Dorsolateral prefrontal cortex (tissue), 120 donors: ENCODE measurements at regions of chr9 and their contacts with region 1.

Region 1: GRCh38 chr9:4740638-4741364 is at the start of gene AK3:
- DNase-seq: peak; percentile 58 to 92 (median 81)
- H3K4me3 ChIP-seq: peak within 1 kb of the TSS; percentile 64 to 99 (median 91)
- H3K27ac ChIP-seq: peak within 1 kb of the TSS; percentile 9 to 96 (median 90)
- H3K27me3 ChIP-seq: no peaks in the 10 kb centered on the region
- CTCF ChIP-seq: peak in 50 of 56 donors; percentile 13 to 70 (median 46)
- total RNA-seq, gene AK3: 30.5 to 87.1 (median 48.8) TPM

Region 2: DNA sequence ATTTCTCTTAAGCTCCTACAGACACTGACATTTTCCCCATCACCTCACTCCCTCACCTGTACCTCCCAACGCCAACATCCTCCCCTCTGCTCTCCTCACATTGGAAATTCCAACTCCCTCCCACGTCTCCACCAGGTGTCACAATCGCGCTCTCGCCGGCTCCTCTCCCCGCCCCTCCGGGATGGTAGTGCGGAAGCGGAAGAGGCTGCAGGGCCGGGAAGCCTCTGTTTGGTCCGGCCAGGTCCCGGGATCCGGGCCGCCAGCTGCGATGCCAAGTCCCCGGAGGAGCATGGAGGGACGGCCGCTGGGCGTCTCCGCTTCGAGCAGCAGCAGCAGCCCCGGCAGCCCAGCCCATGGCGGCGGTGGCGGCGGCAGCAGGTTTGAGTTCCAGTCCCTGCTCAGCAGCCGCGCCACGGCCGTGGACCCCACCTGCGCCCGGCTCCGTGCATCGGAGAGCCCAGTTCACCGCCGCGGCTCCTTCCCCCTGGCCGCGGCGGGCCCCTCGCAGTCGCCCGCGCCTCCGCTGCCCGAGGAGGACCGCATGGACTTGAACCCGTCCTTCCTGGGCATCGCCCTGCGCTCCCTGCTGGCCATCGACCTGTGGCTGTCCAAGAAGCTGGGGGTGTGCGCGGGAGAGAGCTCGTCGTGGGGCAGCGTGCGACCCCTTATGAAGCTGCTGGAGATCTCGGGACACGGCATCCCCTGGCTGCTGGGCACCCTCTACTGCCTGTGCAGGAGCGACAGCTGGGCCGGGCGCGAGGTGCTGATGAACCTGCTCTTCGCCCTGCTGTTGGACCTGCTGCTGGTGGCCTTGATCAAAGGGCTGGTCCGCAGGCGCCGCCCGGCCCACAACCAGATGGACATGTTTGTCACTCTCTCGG is 78.5 kb before region 1 on chr9 and contains the start of gene PLPP6:
- intact Hi-C with region 1: loop called (anchors 2 to 5 kb)
- DNase-seq: peak; percentile 63 to 94 (median 82)
- H3K4me3 ChIP-seq: peak within 1 kb of the TSS; percentile 62 to 96 (median 83)
- H3K27ac ChIP-seq: peak within 1 kb of the TSS in 56 of 59 donors; percentile 2 to 90 (median 78)
- H3K27me3 ChIP-seq: no peaks in the 10 kb centered on the region
- CTCF ChIP-seq: peak; percentile 30 to 79 (median 64)
- total RNA-seq, gene PLPP6: 3.1 to 11.2 (median 6.9) TPM

Region 3: DNA sequence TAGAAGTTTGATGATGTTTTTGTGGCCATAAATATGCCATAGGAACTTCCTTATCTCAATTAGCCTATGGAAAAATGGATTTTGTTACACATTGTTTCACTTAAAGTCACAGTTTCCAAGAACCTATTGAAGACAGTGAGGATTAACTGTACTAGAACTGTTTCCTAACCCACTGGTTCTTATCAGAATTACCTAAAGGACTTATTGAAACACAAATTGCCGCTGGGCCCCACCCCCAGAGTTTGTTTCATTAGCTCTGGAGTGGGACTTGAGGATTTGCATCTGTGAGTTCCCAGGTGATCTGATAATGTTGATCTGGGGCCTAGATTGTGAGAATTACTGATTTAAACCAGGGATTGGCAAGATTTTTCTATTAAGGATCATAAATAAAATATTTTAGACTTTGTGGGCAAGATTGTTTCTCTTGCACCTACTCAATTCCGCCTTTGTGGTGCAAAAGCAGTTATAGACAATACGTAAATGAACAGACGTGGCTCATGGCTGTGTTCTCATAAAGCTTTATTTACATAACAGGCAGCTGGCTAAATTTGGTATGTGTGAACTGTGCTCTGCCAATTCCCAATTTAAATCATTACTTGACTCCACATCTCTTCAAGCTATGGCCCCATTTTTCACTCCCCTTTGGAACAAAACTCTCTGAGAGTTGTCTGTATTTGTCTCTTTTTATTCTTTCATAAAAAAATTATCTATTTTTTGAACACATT is 253.5 kb after region 1 on chr9:
- intact Hi-C with region 1: no loop called
- DNase-seq: no peak
- H3K4me3 ChIP-seq: no peak overlapping the region
- H3K27ac ChIP-seq: peak overlapping the region in 7 of 59 donors; percentile 2 to 49 (median 32)
- H3K27me3 ChIP-seq: no peaks in the 10 kb centered on the region
- CTCF ChIP-seq: no peak